Heart left ventricle (tissue), 16 donors: ENCODE measurements at regions of chr9 and their contacts with region 1.

Region 1: DNA sequence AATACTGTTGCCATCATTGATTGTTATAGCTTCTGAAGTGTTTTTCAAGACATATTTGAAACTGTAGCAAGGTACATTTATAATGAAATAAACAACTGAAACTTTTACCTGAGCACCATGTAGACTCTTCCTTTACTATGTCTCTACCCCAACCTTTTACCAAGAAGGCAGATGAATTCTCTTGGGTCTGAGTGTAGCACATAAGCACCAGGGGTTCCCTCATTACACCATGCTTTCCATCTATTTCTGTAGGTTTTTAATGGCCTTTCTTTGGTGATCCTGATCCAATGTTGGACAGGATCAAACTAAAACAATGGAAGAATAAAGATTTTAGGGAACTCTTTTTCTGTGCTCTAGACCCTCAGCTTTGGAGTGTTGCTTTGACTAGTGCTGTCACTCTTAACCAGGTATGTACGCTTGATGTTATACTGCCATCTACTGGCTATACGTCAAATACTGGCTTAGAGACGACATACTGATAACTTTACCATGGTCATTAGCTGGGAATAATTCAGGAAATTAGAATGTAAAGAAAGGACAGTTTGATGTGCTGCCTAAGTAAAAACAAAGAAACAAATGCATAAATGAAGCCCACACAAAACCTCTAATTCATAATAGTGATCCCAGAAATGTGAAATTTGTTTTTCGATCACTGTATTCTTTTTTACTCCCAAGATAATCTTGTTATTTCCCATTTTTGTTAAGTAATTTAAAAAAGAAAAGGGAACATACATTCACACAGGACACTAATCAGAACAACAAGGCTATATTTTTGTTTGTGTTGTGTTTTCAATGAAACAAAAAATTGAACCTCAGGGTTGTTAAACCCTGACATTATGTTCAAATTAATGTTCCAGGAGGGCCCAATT is 30.7 kb downstream of the IFNW1 start:
- DNase-seq: no peak
- ATAC-seq: peak in 3 of 4 donors; percentile 79 to 82 (median 80)
- H3K4me3 ChIP-seq: no peak overlapping the region
- H3K27ac ChIP-seq: no peak overlapping the region
- H3K4me1 ChIP-seq: no peaks in the 10 kb centered on the region
- H3K27me3 ChIP-seq: no peaks in the 10 kb centered on the region
- CTCF ChIP-seq: peak; percentile 73 to 90 (median 85)
- POLR2A ChIP-seq: no peak

Region 2: DNA sequence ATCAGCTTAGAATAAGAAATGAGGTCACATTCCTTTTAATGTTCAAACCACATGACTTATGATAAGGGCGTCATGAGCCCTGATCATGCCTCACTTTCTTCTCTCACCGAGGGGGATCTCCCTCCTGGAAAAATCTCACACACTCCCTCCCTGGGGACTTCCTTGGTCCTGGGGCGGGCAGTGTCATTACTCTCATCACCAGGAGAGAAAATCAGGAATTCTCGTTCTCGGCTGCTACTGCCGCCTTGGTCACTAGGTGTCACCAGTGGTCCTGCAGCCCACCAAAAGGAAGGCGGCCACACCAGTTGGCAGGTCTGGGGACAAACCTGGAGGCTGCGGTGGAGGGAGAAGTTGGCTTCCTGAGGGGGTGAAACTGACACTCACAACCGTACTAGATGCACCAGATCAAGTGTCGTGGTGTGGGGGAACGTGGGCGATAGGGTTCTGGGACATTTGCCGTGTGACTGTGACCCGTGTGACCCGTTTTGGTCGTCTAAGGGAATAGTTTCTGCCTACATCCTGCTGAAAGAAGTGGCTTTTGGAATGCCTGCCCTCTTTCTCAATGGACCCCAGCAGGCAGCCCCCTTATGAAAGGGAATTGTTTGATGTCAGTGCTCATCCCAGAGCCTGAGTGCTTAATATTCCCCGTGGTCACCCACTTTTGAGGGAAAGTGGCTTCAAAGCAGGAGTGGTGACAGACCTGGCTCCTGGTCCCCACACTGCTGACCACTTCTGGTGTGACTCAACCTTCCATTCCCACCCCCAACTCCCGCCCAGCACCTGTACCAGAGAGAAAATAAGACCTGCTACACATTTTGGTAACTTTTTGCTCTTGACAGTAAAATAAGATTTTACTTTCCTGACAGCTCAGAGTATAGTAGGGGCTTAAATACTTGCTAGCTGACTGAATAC is 1638.9 kb before region 1 on chr9:
- intact Hi-C with region 1: loop called in 1 of 10 experiments (anchors 10 kb)
- DNase-seq: peak; percentile 43 to 75 (median 61)
- ATAC-seq: peak; percentile 32 to 88 (median 78)
- H3K4me3 ChIP-seq: peak overlapping the region in 7 of 12 donors; percentile 10 to 34 (median 17)
- H3K27ac ChIP-seq: peak overlapping the region in 1 of 12 donors; percentile 42
- H3K4me1 ChIP-seq: peaks cover 0 to 15% (median 10%) of the 10 kb centered on the region in 12 donors
- H3K27me3 ChIP-seq: no peaks in the 10 kb centered on the region
- CTCF ChIP-seq: peak; percentile 65 to 85 (median 74)
- POLR2A ChIP-seq: no peak

Region 3: GRCh38 chr9:19925817-19926503 is 1185.0 kb before region 1 on chr9:
- intact Hi-C with region 1: loop called (anchors 1 to 10 kb)
- DNase-seq: peak; percentile 64 to 70 (median 69)
- ATAC-seq: peak; percentile 83 to 96 (median 94)
- H3K4me3 ChIP-seq: peak overlapping the region in 11 of 12 donors; percentile 14 to 54 (median 41)
- H3K27ac ChIP-seq: no peak overlapping the region
- H3K4me1 ChIP-seq: peaks cover 0 to 8% (median 0%) of the 10 kb centered on the region in 12 donors
- H3K27me3 ChIP-seq: peaks cover 0 to 4% (median 0%) of the 10 kb centered on the region in 9 donors
- CTCF ChIP-seq: peak; percentile 92 to 99 (median 96)
- POLR2A ChIP-seq: no peak

Region 4: GRCh38 chr9:20361656-20362570 is 749.0 kb before region 1 on chr9:
- intact Hi-C with region 1: loop called in 4 of 10 experiments (anchors 5 to 10 kb)
- DNase-seq: no peak
- ATAC-seq: no peak
- H3K4me3 ChIP-seq: no peak overlapping the region
- H3K27ac ChIP-seq: no peak overlapping the region
- H3K4me1 ChIP-seq: peaks cover 0 to 7% (median 3%) of the 10 kb centered on the region in 12 donors
- H3K27me3 ChIP-seq: no peaks in the 10 kb centered on the region
- CTCF ChIP-seq: no peak
- POLR2A ChIP-seq: no peak

Region 5: GRCh38 chr9:20906326-20906725 is 204.6 kb before region 1 on chr9:
- intact Hi-C with region 1: loop called in 1 of 10 experiments (anchors 10 kb)
- DNase-seq: no peak
- ATAC-seq: no peak
- H3K4me3 ChIP-seq: no peak overlapping the region
- H3K27ac ChIP-seq: no peak overlapping the region
- H3K4me1 ChIP-seq: no peaks in the 10 kb centered on the region
- H3K27me3 ChIP-seq: no peaks in the 10 kb centered on the region
- CTCF ChIP-seq: no peak
- POLR2A ChIP-seq: no peak

Region 6: GRCh38 chr9:20962536-20963225 is 148.3 kb before region 1 on chr9:
- intact Hi-C with region 1: loop called in 4 of 10 experiments (anchors 10 kb)
- DNase-seq: no peak
- ATAC-seq: no peak
- H3K4me3 ChIP-seq: no peak overlapping the region
- H3K27ac ChIP-seq: no peak overlapping the region
- H3K4me1 ChIP-seq: no peaks in the 10 kb centered on the region
- H3K27me3 ChIP-seq: no peaks in the 10 kb centered on the region
- CTCF ChIP-seq: no peak
- POLR2A ChIP-seq: no peak

Region 7: DNA sequence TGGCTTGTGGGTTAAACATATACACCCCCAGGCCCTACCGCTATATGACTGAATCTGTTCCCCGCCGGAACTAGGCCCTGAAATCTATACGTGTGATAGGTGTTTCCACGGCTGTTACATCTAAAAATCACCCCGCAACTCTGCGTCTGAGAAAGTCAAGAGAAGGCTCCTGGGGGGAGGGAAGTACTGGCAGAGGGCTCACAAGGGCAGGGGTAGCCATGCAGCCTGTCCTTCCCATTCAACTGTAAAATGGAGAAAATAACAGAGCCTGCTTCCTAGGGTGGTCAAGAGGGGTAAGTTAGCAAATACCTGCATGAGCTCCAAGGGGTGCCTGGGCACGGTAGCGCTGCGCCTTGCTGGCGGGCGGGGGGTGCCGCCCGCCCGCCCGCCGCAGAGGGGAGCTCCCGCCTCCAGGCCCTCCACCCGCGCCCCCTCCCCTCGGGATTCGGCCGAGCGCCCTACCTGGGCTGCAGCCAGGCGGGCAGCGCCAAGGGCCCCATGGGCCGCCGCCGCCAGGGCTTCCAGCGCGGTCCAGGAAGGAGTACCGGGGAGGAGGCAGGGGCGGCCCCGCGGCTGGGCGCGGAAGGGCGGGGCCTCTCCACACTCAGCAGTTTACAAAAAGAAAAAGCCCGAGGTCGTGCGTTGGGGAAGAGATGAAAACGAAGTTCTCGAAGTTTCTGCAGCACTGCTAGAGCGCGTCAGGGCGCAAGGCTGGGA is 79.7 kb before region 1 on chr9 and contains the start of gene HACD4:
- intact Hi-C with region 1: loop called in 5 of 10 experiments (anchors 5 to 10 kb)
- DNase-seq: peak; percentile 48 to 85 (median 63)
- ATAC-seq: peak; percentile 71 to 94 (median 92)
- H3K4me3 ChIP-seq: peak within 1 kb of the TSS; percentile 30 to 73 (median 58)
- H3K27ac ChIP-seq: peak within 1 kb of the TSS in 11 of 12 donors; percentile 18 to 88 (median 54)
- H3K4me1 ChIP-seq: peaks cover 0 to 44% (median 4%) of the 10 kb centered on the region in 12 donors
- H3K27me3 ChIP-seq: peaks cover 0 to 11% (median 0%) of the 10 kb centered on the region in 9 donors
- CTCF ChIP-seq: no peak
- POLR2A ChIP-seq: no peak
- total RNA-seq, gene HACD4: 0.33 to 2.8 (median 0.69) TPM